ENCODE measurements at regions of chr20 and their contacts with region 1.

Region 1: DNA sequence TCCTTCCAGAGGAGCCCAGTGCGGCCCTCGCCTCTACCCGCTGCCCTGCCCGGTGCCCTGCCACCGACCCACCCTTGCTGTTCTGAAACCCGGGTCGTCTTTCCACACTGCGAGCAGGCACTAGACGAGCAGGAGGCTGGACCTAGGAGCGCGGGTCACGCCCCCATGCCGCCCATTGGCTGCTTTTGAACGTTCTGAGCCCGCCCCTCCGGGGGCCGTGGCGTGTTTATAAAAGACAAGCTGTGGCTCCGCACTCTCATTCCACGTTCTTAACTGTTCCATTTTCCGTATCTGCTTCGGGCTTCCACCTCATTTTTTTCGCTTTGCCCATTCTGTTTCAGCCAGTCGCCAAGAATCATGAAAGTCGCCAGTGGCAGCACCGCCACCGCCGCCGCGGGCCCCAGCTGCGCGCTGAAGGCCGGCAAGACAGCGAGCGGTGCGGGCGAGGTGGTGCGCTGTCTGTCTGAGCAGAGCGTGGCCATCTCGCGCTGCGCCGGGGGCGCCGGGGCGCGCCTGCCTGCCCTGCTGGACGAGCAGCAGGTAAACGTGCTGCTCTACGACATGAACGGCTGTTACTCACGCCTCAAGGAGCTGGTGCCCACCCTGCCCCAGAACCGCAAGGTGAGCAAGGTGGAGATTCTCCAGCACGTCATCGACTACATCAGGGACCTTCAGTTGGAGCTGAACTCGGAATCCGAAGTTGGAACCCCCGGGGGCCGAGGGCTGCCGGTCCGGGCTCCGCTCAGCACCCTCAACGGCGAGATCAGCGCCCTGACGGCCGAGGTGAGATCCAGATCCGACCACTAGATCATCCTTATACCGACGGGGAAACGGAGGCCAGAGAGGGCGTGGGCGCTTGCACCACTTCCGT is at the start of gene ID1:
- DNase-seq: peak; percentile 81
- ATAC-seq: peak; percentile 91
- H3K4me3 Mint-ChIP-seq: peak within 1 kb of the TSS; percentile 97
- H3K27ac Mint-ChIP-seq: peak within 1 kb of the TSS; percentile 18
- H3K4me1 Mint-ChIP-seq: peaks cover 30% of the 10 kb centered on the region
- H3K27me3 Mint-ChIP-seq: peaks cover 42% of the 10 kb centered on the region
- CTCF ChIP-seq: no peak
- total RNA-seq, gene ID1: 0.20 and 0.60 TPM in 2 replicates

Region 2: DNA sequence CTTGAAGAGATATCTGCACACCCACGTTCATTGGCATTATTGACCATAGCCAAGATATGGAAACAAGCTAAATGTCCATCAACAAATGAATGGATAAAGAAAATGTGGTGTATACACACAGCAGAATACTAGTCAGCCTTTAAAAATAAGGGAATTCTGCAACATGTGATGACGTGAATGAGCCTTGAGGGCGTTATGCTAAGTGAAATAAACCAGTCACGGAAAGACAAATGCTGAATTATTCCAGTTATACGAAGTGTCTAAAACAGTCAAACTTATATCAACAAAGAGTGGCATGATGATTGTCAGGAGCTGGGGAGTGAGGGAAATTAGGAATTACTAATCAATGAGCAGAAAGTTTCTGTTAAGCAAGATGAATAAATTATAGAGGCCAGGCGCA is 190.9 kb before region 1 on chr20:
- CTCF ChIA-PET with region 1: no interaction called
- POLR2A ChIA-PET with region 1: no interaction called
- intact Hi-C with region 1: loop called (anchors 5 kb)
- DNase-seq: no peak
- ATAC-seq: no peak
- H3K4me3 Mint-ChIP-seq: no peak overlapping the region
- H3K27ac Mint-ChIP-seq: no peak overlapping the region
- H3K4me1 Mint-ChIP-seq: no peaks in the 10 kb centered on the region
- H3K27me3 Mint-ChIP-seq: peaks cover 3% of the 10 kb centered on the region
- CTCF ChIP-seq: no peak

Region 3: GRCh38 chr20:31514159-31515071 is 90.9 kb before region 1 on chr20 and contains the start of gene HM13:
- CTCF ChIA-PET with region 1: no interaction called
- POLR2A ChIA-PET with region 1: no interaction called
- intact Hi-C with region 1: loop called (anchors 2 kb)
- DNase-seq: peak; percentile 80
- ATAC-seq: peak; percentile 87
- H3K4me3 Mint-ChIP-seq: no peak within 1 kb of the TSS
- H3K27ac Mint-ChIP-seq: peak within 1 kb of the TSS; percentile 43
- H3K4me1 Mint-ChIP-seq: peaks cover 7% of the 10 kb centered on the region
- H3K27me3 Mint-ChIP-seq: no peaks in the 10 kb centered on the region
- CTCF ChIP-seq: peak; percentile 70
- total RNA-seq, gene HM13: 77.5 and 90.9 TPM in 2 replicates

Region 4: DNA sequence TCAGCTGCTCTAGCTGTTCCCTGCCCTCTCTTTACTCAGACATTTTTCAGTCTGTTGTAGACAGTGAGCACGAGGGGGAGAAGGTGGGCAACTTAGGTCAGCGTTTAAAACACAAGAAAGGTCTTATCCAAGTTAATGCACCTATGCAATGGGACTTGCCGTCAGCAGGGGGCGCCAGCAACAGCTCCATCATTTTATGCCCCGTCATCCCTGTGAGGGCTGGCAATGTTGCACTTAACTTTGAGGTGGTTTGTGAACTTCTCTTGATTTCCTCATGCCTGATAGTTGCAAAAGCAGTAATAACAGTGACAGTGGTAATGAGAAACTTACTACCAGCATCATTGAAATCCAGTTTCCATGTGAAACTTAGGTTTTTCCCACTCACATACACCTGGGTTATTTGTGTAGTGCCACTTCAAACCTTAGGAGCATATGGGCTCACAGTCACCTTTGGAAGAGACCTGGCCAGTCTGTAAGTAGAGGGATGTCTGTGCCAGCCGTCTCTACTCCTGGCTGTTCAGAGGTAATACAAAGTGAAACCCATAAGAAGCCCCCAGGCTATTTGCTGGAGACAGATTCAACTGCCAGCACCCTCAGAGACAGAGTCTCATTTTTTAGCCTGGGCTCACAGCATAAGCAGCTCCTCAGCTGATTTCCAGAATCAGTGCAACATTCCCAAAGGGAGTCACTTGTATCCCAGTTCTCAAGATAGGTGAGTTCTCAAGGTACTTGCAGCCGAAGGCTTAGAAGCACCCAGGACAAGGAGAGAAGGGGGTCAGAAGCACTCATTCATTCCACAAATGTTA is 45.0 kb before region 1 on chr20:
- CTCF ChIA-PET with region 1: interaction called, 256 read pairs
- POLR2A ChIA-PET with region 1: no interaction called
- intact Hi-C with region 1: no loop called
- DNase-seq: peak; percentile 61
- ATAC-seq: peak; percentile 67
- H3K4me3 Mint-ChIP-seq: no peak overlapping the region
- H3K27ac Mint-ChIP-seq: no peak overlapping the region
- H3K4me1 Mint-ChIP-seq: peaks cover 4% of the 10 kb centered on the region
- H3K27me3 Mint-ChIP-seq: no peaks in the 10 kb centered on the region
- CTCF ChIP-seq: peak; percentile 82

Region 5: DNA sequence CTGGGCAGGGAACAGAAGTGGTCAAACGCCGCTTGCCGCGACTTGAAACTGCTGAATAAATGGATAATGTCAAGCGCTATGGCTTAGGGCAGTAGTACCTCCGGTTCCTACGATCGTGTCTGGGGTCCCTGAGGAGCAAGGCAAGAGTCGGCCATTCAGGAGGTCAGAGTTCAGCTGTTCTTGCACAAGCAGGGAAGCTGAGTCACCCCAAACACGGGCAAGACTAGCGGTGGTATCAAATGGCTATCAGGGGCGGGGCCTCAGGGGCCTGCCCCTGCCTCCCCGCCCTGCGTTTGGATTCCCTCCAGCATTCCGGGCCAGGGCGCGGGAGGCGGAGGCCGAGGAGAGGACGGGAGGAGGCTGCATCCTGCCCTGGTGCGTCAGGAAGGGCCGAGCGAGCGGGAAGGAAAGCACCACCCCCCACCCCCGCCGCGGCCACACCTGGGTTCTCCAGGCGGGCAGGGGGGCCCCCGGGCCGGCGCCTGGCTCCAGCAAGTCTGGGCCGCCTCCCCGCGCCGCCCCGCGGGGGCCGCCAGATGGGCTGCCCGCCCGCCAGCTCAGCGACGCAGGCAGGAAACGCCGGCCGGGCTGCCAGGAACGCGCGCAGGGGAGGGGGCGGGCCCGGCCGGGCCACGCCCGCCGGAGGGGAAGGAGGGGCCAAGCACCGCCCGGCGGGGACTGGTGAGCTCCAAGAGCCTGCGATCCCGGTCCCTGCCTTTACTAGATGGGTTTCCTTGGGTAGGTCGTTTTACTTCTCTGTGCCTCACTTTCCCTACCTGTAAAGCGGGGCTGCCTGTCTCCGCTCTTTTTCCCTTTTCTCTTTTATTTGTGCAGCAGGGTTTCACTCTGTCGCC is 32.3 kb before region 1 on chr20:
- CTCF ChIA-PET with region 1: interaction called, 174 read pairs
- POLR2A ChIA-PET with region 1: interaction called, 15 read pairs
- intact Hi-C with region 1: loop called (anchors 1 kb)
- DNase-seq: peak; percentile 75
- ATAC-seq: peak; percentile 91
- H3K4me3 Mint-ChIP-seq: peak overlapping the region; percentile 88
- H3K27ac Mint-ChIP-seq: peak overlapping the region; percentile 79
- H3K4me1 Mint-ChIP-seq: peaks cover 18% of the 10 kb centered on the region
- H3K27me3 Mint-ChIP-seq: no peaks in the 10 kb centered on the region
- CTCF ChIP-seq: no peak

Region 6: GRCh38 chr20:31587545-31588389 is 17.5 kb before region 1 on chr20:
- CTCF ChIA-PET with region 1: interaction called, 3 read pairs
- POLR2A ChIA-PET with region 1: interaction called, 3 read pairs
- intact Hi-C with region 1: loop called (anchors 2 kb)
- DNase-seq: no peak
- ATAC-seq: peak; percentile 61
- H3K4me3 Mint-ChIP-seq: peak overlapping the region; percentile 78
- H3K27ac Mint-ChIP-seq: no peak overlapping the region
- H3K4me1 Mint-ChIP-seq: peaks cover 8% of the 10 kb centered on the region
- H3K27me3 Mint-ChIP-seq: peaks cover 24% of the 10 kb centered on the region
- CTCF ChIP-seq: no peak

Region 7: GRCh38 chr20:31661625-31662371 is 56.5 kb after region 1 on chr20:
- CTCF ChIA-PET with region 1: no interaction called
- POLR2A ChIA-PET with region 1: no interaction called
- intact Hi-C with region 1: loop called (anchors 2 kb)
- DNase-seq: peak; percentile 69
- ATAC-seq: peak; percentile 89
- H3K4me3 Mint-ChIP-seq: peak overlapping the region; percentile 76
- H3K27ac Mint-ChIP-seq: peak overlapping the region; percentile 75
- H3K4me1 Mint-ChIP-seq: peaks cover 30% of the 10 kb centered on the region
- H3K27me3 Mint-ChIP-seq: no peaks in the 10 kb centered on the region
- CTCF ChIP-seq: no peak

Region 8: DNA sequence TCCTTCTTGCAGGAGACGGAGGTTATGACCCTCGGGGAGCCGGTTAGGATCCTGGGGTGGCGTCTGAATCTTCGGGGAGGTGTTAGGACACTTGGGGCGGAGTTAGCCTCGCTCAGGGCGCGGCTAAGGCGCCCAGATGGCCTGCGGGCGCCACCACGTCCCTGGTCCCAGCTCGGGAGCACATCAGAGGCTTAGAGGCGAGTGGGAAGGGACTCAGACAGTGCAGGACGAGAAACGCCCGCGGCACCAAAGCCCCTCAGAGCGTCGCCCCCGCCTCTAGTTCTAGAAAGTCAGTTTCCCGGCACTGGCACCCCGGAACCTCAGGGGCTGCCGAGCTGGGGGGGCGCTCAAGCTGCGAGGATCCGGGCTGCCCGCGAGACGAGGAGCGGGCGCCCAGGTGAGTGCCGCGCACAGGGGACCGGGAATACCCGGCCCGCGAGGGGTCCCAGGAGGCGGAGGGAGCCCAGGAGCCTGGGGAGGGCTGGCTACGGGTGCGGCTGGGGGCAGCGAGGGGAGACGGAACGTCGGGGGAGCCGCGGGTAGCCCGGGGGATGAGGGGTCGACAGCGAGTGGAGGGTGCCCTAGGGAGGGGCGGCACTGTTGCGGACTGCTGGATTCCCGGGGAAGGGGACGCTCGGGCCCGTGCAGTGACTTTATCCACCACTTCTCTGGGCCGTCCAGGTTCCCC is 447.0 kb after region 1 on chr20 and contains the start of gene HCK:
- CTCF ChIA-PET with region 1: no interaction called
- POLR2A ChIA-PET with region 1: no interaction called
- intact Hi-C with region 1: no loop called
- DNase-seq: peak; percentile 46
- ATAC-seq: peak; percentile 54
- H3K4me3 Mint-ChIP-seq: peak within 1 kb of the TSS; percentile 93
- H3K27ac Mint-ChIP-seq: peak within 1 kb of the TSS; percentile 93
- H3K4me1 Mint-ChIP-seq: peaks cover 54% of the 10 kb centered on the region
- H3K27me3 Mint-ChIP-seq: no peaks in the 10 kb centered on the region
- CTCF ChIP-seq: no peak
- total RNA-seq, gene HCK: 183 TPM in 2 replicates

Measured in activated B cell treated with CpG ODN at 0.5 μM for 24 hours (primary cell).